AG04450 (cell line): ENCODE measurements at regions of chr2 and their contacts with region 1.

Region 1: DNA sequence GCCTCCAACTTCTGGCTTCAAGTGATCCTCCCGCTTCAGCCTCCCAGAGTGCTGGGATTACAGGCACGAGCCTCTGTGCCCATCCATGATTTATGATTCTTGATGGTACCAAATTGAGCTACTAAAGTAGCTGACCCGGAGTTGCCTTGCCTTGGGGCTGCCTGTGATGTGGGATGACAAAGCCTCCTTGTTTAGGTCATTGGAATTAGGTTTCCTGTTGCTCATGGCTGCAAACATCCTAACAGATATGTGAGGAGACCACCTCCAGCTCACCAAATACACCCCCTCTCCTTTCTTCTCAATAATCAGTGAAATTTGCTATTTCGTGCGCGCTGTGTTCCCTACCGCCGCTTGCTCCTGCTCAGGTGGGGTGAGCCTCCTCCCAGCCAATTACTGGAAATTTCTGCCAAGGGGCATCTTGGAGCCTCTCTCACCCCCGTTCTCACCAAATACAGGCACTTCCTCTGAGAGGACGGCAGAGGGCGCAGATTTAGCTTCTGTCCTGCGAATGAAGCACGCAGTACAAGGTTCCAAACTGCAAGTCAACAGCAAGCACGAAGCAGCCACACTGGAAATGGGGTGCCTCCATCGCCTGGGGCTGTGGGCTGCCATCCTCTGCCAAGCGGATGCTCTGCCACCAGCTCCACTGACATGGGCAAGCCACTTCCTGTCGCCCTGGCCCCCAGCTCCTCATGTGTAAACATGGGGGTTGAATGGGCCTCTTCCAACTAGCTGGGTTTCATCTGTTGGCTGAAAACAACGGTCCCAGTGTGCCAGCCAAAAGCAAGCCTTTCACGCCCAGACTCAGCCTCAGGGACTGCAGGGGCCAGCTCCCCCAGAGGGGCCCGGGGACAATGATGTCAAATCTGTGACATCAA is 71.7 kb downstream of the NCAPH start:
- DNase-seq: peak; percentile 63
- H3K4me3 ChIP-seq: no peak overlapping the region
- H3K27ac ChIP-seq: peak overlapping the region; percentile 11
- H3K27me3 ChIP-seq: peaks cover 40% of the 10 kb centered on the region
- CTCF ChIP-seq: peak; percentile 88

Region 2: DNA sequence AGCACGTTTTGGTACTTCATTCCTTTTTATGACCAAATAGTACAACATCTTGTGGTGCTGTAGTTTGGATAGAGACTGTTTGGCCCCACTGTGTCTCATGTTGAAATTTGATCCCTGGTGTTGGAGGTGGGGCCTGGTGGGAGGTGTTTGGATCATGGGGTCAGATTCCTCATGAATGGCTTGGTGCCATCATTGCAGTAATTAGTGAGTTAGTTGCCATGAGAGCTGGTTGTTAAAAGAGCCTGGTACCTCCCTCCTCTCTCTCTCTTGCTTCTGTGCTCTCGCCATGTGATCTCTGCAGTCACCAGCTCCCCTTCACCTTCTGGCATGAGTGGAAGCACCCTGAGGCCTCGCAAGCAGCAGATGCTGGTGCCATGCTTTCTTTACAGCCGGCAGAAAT is 20.8 kb before region 1 on chr2:
- CTCF ChIA-PET with region 1: interaction called, 12 read pairs
- POLR2A ChIA-PET with region 1: no interaction called
- DNase-seq: no peak
- H3K4me3 ChIP-seq: no peak overlapping the region
- H3K27ac ChIP-seq: no peak overlapping the region
- H3K27me3 ChIP-seq: no peaks in the 10 kb centered on the region
- CTCF ChIP-seq: no peak

Region 3: GRCh38 chr2:96423828-96424227 is 16.5 kb after region 1 on chr2:
- CTCF ChIA-PET with region 1: interaction called, 13 read pairs
- POLR2A ChIA-PET with region 1: no interaction called
- DNase-seq: no peak
- H3K4me3 ChIP-seq: no peak overlapping the region
- H3K27ac ChIP-seq: no peak overlapping the region
- H3K27me3 ChIP-seq: peaks cover 21% of the 10 kb centered on the region
- CTCF ChIP-seq: no peak

Region 4: DNA sequence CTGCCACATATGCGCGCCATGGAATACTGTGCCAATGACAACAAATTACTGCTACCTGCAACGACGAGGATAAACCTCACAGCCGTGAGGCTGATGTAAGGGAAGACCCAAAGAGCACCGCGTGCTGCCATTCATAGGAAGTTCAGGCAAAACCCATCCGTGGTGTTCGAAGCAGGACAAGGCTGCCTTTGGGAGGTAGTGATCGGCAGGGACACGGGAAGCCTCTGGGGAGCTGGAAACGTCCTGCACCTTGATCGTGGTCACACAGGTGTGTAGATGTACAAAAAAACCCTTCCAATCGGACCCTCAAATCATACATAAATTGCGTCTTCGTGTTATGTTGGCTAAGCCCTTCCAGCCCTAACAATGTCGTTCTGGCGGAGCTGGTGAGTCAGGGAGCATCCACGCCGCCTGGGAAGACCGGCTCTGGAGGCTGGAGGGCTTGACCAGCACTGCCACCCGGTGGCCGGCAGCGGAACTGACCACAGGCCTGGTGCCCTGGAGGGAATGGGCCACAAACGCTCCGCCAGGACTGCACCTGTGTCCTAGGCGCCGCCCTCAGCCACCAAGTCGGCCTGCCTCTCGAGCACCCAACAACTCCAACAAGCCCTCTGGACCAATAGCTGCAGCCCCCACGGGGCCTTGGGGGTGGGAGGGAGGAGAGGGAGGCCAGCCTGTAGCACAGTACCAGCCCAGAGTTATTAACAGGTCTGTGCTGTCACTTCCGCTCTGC is 102.0 kb after region 1 on chr2:
- CTCF ChIA-PET with region 1: interaction called, 140 read pairs
- POLR2A ChIA-PET with region 1: no interaction called
- DNase-seq: peak; percentile 55
- H3K4me3 ChIP-seq: no peak overlapping the region
- H3K27ac ChIP-seq: no peak overlapping the region
- H3K27me3 ChIP-seq: peaks cover 21% of the 10 kb centered on the region
- CTCF ChIP-seq: peak; percentile 96

Region 5: DNA sequence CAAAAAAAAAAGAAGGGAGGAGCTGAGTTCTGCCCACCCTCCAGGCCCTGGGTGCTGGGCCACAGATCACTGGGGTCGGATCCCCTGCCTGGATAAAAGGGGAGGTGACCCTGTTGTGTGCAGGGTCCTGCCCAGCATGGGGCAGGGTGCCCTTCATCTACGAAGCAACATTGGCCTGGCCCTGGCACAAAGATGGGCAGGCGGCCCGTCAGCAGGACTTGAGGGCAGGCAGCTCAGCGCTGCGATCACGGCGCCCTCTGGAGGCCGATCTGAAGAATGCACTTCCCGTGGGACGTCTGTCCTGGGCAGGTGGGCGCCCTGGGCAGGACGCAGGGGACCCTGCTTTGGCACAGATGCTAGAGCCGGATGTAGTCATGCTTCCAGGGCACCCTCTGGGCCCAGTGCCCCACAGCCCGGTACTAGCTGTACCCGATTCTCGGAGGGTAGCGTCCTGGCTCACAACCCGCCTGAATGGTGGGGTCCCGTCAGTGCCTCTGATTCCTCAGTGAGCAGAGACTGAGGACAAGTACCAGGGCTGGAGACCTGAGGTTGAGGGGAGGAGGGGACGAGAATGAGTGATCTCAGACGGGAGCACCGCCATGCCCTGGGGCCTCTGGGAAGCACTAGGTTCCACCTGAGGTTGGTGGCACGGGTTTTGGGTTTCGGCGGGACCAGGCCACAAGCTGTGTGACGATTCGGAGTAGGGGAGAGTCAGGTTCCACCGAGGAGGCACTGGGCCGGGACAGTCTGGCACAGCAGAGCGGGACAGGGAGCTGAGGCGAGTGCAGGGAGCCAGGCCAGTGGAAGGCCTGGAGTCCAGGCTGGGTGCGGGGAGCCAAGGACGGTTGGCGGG is 147.2 kb after region 1 on chr2:
- CTCF ChIA-PET with region 1: interaction called, 39 read pairs
- POLR2A ChIA-PET with region 1: no interaction called
- DNase-seq: no peak
- H3K4me3 ChIP-seq: no peak overlapping the region
- H3K27ac ChIP-seq: no peak overlapping the region
- H3K27me3 ChIP-seq: no peaks in the 10 kb centered on the region
- CTCF ChIP-seq: peak; percentile 86

Region 6: GRCh38 chr2:96760036-96760985 is 353.0 kb after region 1 on chr2 and contains the start of gene CNNM4:
- CTCF ChIA-PET with region 1: no interaction called
- POLR2A ChIA-PET with region 1: interaction called, 12 read pairs
- DNase-seq: peak; percentile 66
- H3K4me3 ChIP-seq: peak within 1 kb of the TSS; percentile 82
- H3K27ac ChIP-seq: peak within 1 kb of the TSS; percentile 47
- H3K27me3 ChIP-seq: no peaks in the 10 kb centered on the region
- CTCF ChIP-seq: peak; percentile 9; the same call in 1 of the 2 replicates
- polyA plus RNA-seq, gene CNNM4: 4.7 and 4.9 TPM in 2 replicates